Activated naive CD4-positive, alpha-beta T cell treated with anti-CD3 and anti-CD28 coated beads for 36 hours (primary cell): ENCODE measurements at regions of chr7 and their contacts with region 1.

Region 1: DNA sequence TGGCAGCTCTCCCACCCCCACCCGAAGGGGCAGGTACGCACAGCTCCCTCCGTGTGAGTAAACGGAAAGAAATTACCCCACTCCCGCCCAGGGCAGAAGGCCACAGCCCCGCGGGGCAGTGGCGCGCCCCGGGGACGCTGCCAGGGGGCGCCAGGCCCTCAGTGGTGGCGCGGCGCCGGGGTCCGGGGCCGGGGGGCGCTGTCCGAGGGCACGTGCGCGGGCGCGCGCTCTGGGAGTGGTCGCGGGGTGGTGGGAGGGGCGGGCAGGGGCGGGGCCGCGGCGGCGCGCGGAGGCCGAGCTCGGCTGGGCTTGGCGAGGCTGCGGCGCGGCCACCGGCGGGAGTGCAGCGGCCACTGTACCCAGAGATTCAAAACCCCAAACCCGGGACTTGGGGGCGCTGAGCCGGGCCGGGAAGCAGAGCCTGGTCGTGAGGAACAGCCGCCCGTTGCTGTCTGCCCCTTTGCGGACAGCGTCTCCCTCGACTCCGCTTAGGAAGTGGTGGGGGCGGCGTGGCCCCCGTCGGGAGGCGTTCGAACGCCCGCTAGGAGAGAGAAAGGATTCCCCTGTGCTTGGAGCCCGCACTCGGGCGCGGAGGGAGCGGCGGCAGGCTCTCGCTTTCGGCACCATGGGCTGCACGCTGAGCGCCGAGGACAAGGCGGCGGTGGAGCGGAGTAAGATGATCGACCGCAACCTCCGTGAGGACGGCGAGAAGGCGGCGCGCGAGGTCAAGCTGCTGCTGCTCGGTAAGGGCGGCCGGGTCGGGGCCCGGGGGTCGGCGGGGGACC is at the start of gene GNAI1:
- DNase-seq: peak; percentile 39
- H3K4me3 Mint-ChIP-seq: peak within 1 kb of the TSS; percentile 74
- H3K27ac Mint-ChIP-seq: peak within 1 kb of the TSS; percentile 66
- H3K4me1 Mint-ChIP-seq: peaks cover 37% of the 10 kb centered on the region
- H3K27me3 Mint-ChIP-seq: peaks cover 48% of the 10 kb centered on the region
- total RNA-seq, gene GNAI1: 2.3 to 2.4 TPM

Region 2: DNA sequence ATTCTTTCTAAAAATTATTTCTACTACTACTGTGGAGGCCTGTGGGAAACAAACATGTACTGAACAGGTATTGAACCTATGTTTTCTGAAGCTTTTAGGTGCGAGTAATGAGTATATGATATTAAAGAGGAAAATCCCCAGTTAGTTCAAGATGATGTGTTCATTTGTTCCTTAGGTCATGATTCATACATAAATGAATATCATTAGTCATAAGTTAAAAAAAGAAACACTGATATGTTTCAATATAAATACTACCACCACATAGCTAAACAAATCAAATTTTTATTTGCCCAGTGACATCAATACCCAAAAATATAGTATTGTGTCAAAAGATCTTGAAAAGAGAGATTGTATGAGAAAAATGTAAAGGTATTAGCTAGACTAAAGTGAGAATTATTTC is 210.8 kb before region 1 on chr7:
- CTCF ChIA-PET with region 1: no interaction called
- intact Hi-C with region 1: no loop called
- DNase-seq: no peak
- H3K4me3 Mint-ChIP-seq: no peak overlapping the region
- H3K27ac Mint-ChIP-seq: no peak overlapping the region
- H3K4me1 Mint-ChIP-seq: peaks cover 5% of the 10 kb centered on the region
- H3K27me3 Mint-ChIP-seq: no peaks in the 10 kb centered on the region

Region 3: DNA sequence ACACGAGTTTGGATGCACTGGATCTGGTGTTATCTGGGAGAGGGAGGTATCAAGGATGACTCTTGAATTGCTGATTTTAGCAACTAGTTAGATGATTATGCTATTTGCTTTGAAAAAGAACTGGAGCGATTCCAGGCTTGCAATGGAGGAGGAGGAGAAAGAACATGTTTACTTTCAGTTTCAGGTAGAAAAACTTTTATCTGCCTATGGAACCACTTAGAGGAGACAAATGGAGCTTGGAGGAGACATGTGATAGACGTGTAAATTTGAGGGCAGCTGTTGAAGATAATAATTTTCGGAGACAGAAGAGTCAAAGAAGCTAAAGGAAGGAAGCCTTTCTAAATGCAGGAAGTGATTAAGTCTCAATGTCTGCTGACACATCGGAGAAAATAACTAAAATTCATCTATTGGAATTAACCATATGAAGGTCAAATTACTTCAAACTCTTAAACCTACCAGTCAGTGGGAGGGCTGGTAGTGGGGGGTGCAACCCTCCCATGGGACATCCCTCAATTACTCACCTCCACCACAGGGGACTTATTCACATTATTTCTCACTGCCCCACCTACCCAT is 56.5 kb before region 1 on chr7:
- CTCF ChIA-PET with region 1: no interaction called
- intact Hi-C with region 1: loop called (anchors 5 kb)
- DNase-seq: peak; percentile 32
- H3K4me3 Mint-ChIP-seq: peak overlapping the region; percentile 61
- H3K27ac Mint-ChIP-seq: peak overlapping the region; percentile 23
- H3K4me1 Mint-ChIP-seq: peaks cover 13% of the 10 kb centered on the region
- H3K27me3 Mint-ChIP-seq: no peaks in the 10 kb centered on the region

Region 4: DNA sequence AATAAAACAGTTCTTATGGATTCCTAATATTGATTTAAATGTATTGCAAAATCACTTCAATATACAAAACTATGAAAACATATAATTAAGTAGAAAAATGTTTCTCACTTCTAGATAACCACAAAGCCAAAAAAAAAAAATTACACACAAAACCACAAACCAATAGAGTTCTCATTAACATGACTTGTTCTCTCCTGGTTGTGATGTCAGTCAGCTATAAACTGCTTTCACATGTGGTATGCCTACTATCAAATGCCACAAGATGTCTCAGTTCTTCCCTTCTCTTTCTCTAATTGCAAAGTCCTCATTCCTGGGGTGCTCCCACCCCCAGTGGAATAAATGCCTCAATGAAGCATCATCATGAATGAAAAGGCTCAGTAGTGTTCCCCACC is 16.5 kb after region 1 on chr7:
- CTCF ChIA-PET with region 1: interaction called, 7 read pairs
- intact Hi-C with region 1: loop called (anchors 1 kb)
- DNase-seq: peak; percentile 61
- H3K4me3 Mint-ChIP-seq: no peak overlapping the region
- H3K27ac Mint-ChIP-seq: peak overlapping the region; percentile 26
- H3K4me1 Mint-ChIP-seq: peaks cover 18% of the 10 kb centered on the region
- H3K27me3 Mint-ChIP-seq: peaks cover 14% of the 10 kb centered on the region

Region 5: GRCh38 chr7:80218723-80219122 is 84.0 kb after region 1 on chr7:
- CTCF ChIA-PET with region 1: no interaction called
- intact Hi-C with region 1: loop called (anchors 1 kb)
- DNase-seq: peak; percentile 18
- H3K4me3 Mint-ChIP-seq: no peak overlapping the region
- H3K27ac Mint-ChIP-seq: no peak overlapping the region
- H3K4me1 Mint-ChIP-seq: peaks cover 7% of the 10 kb centered on the region
- H3K27me3 Mint-ChIP-seq: peaks cover under 1% of the 10 kb centered on the region

Region 6: GRCh38 chr7:80312139-80312661 is 177.5 kb after region 1 on chr7:
- CTCF ChIA-PET with region 1: no interaction called
- intact Hi-C with region 1: loop called (anchors 1 kb)
- DNase-seq: peak; percentile 49
- H3K4me3 Mint-ChIP-seq: peak overlapping the region; percentile 16
- H3K27ac Mint-ChIP-seq: peak overlapping the region; percentile 38
- H3K4me1 Mint-ChIP-seq: peaks cover 30% of the 10 kb centered on the region
- H3K27me3 Mint-ChIP-seq: no peaks in the 10 kb centered on the region

Region 7: GRCh38 chr7:80392229-80393169 is 257.8 kb after region 1 on chr7:
- CTCF ChIA-PET with region 1: no interaction called
- intact Hi-C with region 1: loop called (anchors 1 kb)
- DNase-seq: no peak
- H3K4me3 Mint-ChIP-seq: no peak overlapping the region
- H3K27ac Mint-ChIP-seq: no peak overlapping the region
- H3K4me1 Mint-ChIP-seq: no peaks in the 10 kb centered on the region
- H3K27me3 Mint-ChIP-seq: no peaks in the 10 kb centered on the region

Region 8: GRCh38 chr7:80659120-80660055 is 524.7 kb after region 1 on chr7:
- CTCF ChIA-PET with region 1: no interaction called
- intact Hi-C with region 1: loop called (anchors 10 kb)
- DNase-seq: no peak
- H3K4me3 Mint-ChIP-seq: no peak overlapping the region
- H3K27ac Mint-ChIP-seq: no peak overlapping the region
- H3K4me1 Mint-ChIP-seq: no peaks in the 10 kb centered on the region
- H3K27me3 Mint-ChIP-seq: no peaks in the 10 kb centered on the region

Region 9: DNA sequence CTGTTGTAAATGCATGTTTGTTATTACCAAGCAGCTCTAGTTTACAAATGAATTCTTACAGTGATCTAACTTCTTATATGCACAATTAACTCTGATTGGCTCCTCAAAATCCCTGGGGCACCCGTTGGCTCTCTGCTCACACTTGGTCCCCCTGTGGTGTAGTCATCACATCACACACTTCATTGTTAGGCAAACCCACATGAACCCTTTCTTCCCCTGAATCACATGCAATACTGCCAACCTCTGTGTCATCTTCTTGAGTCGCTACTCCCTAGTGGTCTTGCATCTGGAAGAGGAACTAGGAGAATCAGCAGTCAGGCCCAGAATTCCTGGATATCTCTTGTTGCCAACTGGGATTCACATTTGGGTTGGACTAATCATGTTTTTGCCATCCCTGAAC is 576.8 kb after region 1 on chr7:
- CTCF ChIA-PET with region 1: no interaction called
- intact Hi-C with region 1: no loop called
- DNase-seq: no peak
- H3K4me3 Mint-ChIP-seq: no peak overlapping the region
- H3K27ac Mint-ChIP-seq: no peak overlapping the region
- H3K4me1 Mint-ChIP-seq: no peaks in the 10 kb centered on the region
- H3K27me3 Mint-ChIP-seq: no peaks in the 10 kb centered on the region

Region 10: GRCh38 chr7:81725812-81726127 is 1591.0 kb after region 1 on chr7:
- CTCF ChIA-PET with region 1: no interaction called
- intact Hi-C with region 1: no loop called
- DNase-seq: no peak
- H3K4me3 Mint-ChIP-seq: no peak overlapping the region
- H3K27ac Mint-ChIP-seq: no peak overlapping the region
- H3K4me1 Mint-ChIP-seq: no peaks in the 10 kb centered on the region
- H3K27me3 Mint-ChIP-seq: no peaks in the 10 kb centered on the region